ENCODE measurements at regions of chr3 and their contacts with region 1.

Region 1: GRCh38 chr3:168213920-168214319 is 118.2 kb upstream of the GOLIM4 start:
- DNase-seq: no peak
- ATAC-seq: no peak
- H3K4me3 ChIP-seq: no peak overlapping the region
- H3K27ac ChIP-seq: no peak overlapping the region
- H3K4me1 ChIP-seq: no peaks in the 10 kb centered on the region
- H3K27me3 ChIP-seq: no peaks in the 10 kb centered on the region
- CTCF ChIP-seq: no peak
- POLR2A ChIP-seq: no peak
- RAD21 ChIP-seq: no peak

Region 2: DNA sequence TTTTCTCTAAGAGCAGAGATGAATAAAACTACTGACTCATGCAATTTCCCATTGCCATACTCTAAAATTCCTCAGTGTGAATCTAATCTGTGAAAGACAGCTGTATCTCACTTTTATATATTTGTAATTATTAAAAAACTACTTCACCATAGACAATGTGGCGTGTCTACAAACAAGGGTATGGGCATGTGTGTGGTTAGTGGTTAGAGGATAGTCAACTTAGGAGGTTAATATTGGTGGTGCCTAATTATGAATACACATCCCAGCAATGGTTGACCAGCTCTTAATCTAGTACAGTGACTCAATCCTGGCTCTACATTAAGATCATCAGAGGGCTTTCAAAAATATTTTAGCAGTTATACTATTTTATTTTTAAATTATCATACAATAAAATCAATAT is 212.7 kb before region 1 on chr3:
- CTCF ChIA-PET with region 1: no interaction called
- POLR2A ChIA-PET with region 1: no interaction called
- RAD21 ChIA-PET with region 1: no interaction called
- intact Hi-C with region 1: no loop called
- DNase-seq: no peak
- ATAC-seq: no peak
- H3K4me3 ChIP-seq: no peak overlapping the region
- H3K27ac ChIP-seq: no peak overlapping the region
- H3K4me1 ChIP-seq: peaks cover 0 to 8% of the 10 kb centered on the region in 2 experiments; a peak in 1 of 4 replicates
- H3K27me3 ChIP-seq: no peaks in the 10 kb centered on the region
- CTCF ChIP-seq: no peak
- POLR2A ChIP-seq: no peak
- RAD21 ChIP-seq: no peak

Region 3: DNA sequence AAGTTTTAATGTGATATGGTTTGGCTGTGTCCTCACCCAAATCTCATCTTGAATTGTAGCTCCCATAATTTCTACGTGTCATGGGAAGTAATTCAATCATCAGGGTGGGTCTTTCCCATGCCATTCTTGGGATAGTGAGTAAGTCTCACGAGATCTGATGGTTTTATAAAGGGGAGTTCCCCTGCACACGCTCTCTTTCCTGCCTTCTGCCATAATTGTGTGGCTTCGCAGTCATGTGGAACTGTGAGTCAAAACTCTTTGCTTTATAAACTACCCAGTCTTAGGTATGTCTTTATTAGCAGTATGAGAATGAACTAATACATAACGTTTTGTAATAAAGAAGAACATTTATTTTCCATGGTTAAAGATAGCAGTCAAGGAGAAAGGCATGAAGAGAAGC is 79.0 kb before region 1 on chr3:
- CTCF ChIA-PET with region 1: no interaction called
- POLR2A ChIA-PET with region 1: no interaction called
- RAD21 ChIA-PET with region 1: no interaction called
- intact Hi-C with region 1: no loop called
- DNase-seq: no peak
- ATAC-seq: no peak
- H3K4me3 ChIP-seq: no peak overlapping the region
- H3K27ac ChIP-seq: no peak overlapping the region
- H3K4me1 ChIP-seq: no peaks in the 10 kb centered on the region
- H3K27me3 ChIP-seq: no peaks in the 10 kb centered on the region
- CTCF ChIP-seq: no peak
- POLR2A ChIP-seq: no peak
- RAD21 ChIP-seq: no peak

Region 4: DNA sequence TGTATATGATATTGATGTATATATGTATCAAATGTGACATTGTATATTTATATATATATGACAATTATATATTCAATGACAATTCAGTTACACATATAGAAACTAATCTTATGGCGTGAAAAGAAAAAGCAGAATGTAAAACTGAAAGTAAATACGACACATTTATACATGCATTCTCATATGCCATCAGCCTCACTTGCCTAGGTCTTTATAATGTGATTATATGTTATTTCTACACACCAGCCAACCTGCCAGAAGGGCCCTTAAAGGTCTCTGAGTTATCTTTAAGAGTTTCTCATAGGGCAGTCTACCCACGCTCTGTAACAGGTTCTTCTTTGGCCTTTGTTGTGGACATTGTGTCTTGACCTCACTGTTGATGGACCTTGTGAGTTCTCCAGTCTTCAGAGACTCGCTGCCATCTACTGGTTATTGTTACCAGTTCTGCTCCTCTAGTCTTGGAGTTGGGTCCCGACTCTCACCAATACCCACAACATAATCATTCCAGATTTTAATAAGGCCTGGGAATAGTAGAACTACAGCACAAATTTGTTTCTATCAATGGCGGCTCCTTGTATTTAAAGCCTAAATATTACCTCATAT is 253.3 kb after region 1 on chr3:
- CTCF ChIA-PET with region 1: interaction called, 8 read pairs
- POLR2A ChIA-PET with region 1: no interaction called
- RAD21 ChIA-PET with region 1: no interaction called
- intact Hi-C with region 1: loop called (anchors 2 kb)
- DNase-seq: no peak
- ATAC-seq: peak; percentile 60; the same call in 1 of the 2 replicates
- H3K4me3 ChIP-seq: no peak overlapping the region
- H3K27ac ChIP-seq: no peak overlapping the region
- H3K4me1 ChIP-seq: no peaks in the 10 kb centered on the region
- H3K27me3 ChIP-seq: peaks cover 11% of the 10 kb centered on the region; the same call in 1 of the 2 replicates
- CTCF ChIP-seq: peak in 2 of 3 experiments; percentile 16 to 22; a peak in 1 of 6 replicates
- POLR2A ChIP-seq: no peak
- RAD21 ChIP-seq: peak; percentile 40

Region 5: DNA sequence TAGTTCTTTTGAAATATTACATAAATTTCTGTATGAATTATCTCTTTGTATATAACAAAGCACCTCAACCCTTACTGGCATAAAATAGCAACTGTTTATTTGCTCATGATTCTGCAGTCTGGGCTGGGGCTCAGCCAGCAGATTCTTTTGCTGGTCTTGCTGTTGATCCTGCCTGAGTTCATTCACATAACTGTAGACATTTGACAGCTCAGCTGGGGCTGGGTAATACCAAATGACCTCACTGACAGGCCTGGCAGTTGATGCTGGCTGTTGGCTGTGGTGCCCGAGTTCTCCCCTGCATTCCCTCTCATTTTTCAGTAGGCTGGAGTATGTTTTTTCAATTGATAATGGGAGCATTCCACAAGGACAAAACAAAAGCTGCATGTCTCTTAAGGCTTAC is 331.7 kb after region 1 on chr3:
- CTCF ChIA-PET with region 1: interaction called, 5 read pairs
- POLR2A ChIA-PET with region 1: no interaction called
- RAD21 ChIA-PET with region 1: no interaction called
- intact Hi-C with region 1: loop called (anchors 10 kb)
- DNase-seq: no peak
- ATAC-seq: no peak
- H3K4me3 ChIP-seq: no peak overlapping the region
- H3K27ac ChIP-seq: no peak overlapping the region
- H3K4me1 ChIP-seq: no peaks in the 10 kb centered on the region
- H3K27me3 ChIP-seq: no peaks in the 10 kb centered on the region
- CTCF ChIP-seq: no peak
- POLR2A ChIP-seq: no peak
- RAD21 ChIP-seq: no peak

Region 6: GRCh38 chr3:168847291-168847883 is 633.5 kb after region 1 on chr3:
- CTCF ChIA-PET with region 1: interaction called, 88 read pairs
- POLR2A ChIA-PET with region 1: no interaction called
- RAD21 ChIA-PET with region 1: interaction called, 3 to 10 read pairs
- intact Hi-C with region 1: loop called (anchors 1 kb)
- DNase-seq: no peak
- ATAC-seq: peak; percentile 59; the same call in 1 of the 2 replicates
- H3K4me3 ChIP-seq: no peak overlapping the region
- H3K27ac ChIP-seq: no peak overlapping the region
- H3K4me1 ChIP-seq: no peaks in the 10 kb centered on the region
- H3K27me3 ChIP-seq: peaks cover 25% of the 10 kb centered on the region
- CTCF ChIP-seq: peak; percentile 35 to 76 (median 65); a peak in 5 of 6 replicates
- POLR2A ChIP-seq: no peak
- RAD21 ChIP-seq: peak; percentile 81

Region 7: DNA sequence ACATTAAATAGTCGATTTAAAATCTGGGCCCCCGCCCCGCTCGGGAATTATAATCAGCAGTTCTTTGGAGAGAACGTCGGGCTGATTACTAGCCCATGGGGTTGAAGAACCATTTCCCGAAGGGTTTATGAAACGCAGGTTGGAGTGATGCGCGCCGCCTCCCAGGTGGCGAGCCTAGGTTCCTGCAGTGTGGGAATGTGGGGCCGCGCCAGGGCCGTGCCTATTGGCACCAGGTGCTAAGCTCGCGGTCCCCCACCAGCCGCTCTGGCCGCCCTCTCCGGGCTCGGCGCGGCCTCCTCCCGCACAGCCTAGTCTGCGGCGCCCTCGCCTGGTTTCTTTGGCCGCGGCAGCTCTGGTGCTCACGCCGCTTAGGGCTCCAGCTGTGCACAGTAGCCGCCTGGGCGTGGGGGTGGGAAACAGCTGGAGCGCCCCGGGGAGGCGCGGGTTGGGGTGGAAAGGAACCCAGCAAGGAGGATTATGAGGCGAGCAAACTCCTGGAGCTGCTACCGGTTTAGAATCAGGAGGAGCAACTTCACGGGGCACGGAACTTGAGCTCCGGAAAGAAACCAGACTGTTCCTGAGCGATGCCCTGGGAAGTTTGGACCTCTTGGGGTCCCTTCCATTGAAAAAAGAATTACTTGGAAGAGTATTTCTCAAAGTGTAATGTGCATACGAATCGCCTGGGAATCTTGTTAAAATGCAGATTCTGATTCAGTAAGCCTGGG is 1455.2 kb after region 1 on chr3:
- CTCF ChIA-PET with region 1: interaction called, 7 read pairs
- POLR2A ChIA-PET with region 1: no interaction called
- RAD21 ChIA-PET with region 1: no interaction called
- intact Hi-C with region 1: loop called (anchors 5 kb)
- DNase-seq: peak; percentile 38
- ATAC-seq: peak; percentile 99
- H3K4me3 ChIP-seq: peak overlapping the region; percentile 16 to 17
- H3K27ac ChIP-seq: no peak overlapping the region
- H3K4me1 ChIP-seq: peaks cover 3 to 13% of the 10 kb centered on the region in 2 experiments; a peak in 3 of 4 replicates
- H3K27me3 ChIP-seq: peaks cover 41% of the 10 kb centered on the region
- CTCF ChIP-seq: peak; percentile 72 to 80 (median 78); a peak in 5 of 6 replicates
- POLR2A ChIP-seq: no peak
- RAD21 ChIP-seq: peak; percentile 92